Dendritic cell treated with granulocyte-macrophage colony-stimulating factor and Interleukin-4, amounts not matched to agents 40 ng/mL and 50 ng/mL, for 4 days (primary cell): ENCODE measurements at regions of chr3 and their contacts with region 1.

Region 1: DNA sequence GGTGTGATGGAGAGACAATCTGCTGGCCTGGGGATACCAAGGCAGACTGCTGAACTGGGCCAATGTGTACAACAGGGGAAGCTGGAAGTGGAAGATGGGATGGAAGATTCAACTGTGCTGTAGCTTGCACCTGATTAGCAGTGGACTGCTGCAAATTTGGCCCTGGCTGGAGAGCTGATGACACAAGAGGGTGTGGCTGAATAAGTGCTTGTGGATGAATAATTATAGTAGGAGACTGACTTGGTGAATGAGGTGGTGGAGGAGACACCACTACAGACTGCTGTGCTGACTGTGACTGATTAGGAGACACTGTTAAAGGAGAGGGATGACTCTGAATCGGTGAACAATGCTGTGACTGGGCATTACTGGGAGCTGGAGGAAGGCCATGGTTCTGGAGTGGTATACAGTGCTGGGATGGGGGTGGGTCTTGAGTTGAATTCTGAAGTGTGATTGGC is 52.5 kb downstream of the PHC3 start:
- H3K4me3 Mint-ChIP-seq: no peak overlapping the region
- H3K27ac Mint-ChIP-seq: peak overlapping the region; percentile 55
- H3K4me1 Mint-ChIP-seq: peaks cover 14% of the 10 kb centered on the region
- H3K27me3 Mint-ChIP-seq: no peaks in the 10 kb centered on the region

Region 2: GRCh38 chr3:170171563-170171962 is 42.6 kb after region 1 on chr3:
- intact Hi-C with region 1: loop called (anchors 10 kb)
- H3K4me3 Mint-ChIP-seq: no peak overlapping the region
- H3K27ac Mint-ChIP-seq: no peak overlapping the region
- H3K4me1 Mint-ChIP-seq: peaks cover 11% of the 10 kb centered on the region
- H3K27me3 Mint-ChIP-seq: no peaks in the 10 kb centered on the region